MCF 10A (cell line): ENCODE measurements at regions of chr1 and their contacts with region 1.

Region 1: DNA sequence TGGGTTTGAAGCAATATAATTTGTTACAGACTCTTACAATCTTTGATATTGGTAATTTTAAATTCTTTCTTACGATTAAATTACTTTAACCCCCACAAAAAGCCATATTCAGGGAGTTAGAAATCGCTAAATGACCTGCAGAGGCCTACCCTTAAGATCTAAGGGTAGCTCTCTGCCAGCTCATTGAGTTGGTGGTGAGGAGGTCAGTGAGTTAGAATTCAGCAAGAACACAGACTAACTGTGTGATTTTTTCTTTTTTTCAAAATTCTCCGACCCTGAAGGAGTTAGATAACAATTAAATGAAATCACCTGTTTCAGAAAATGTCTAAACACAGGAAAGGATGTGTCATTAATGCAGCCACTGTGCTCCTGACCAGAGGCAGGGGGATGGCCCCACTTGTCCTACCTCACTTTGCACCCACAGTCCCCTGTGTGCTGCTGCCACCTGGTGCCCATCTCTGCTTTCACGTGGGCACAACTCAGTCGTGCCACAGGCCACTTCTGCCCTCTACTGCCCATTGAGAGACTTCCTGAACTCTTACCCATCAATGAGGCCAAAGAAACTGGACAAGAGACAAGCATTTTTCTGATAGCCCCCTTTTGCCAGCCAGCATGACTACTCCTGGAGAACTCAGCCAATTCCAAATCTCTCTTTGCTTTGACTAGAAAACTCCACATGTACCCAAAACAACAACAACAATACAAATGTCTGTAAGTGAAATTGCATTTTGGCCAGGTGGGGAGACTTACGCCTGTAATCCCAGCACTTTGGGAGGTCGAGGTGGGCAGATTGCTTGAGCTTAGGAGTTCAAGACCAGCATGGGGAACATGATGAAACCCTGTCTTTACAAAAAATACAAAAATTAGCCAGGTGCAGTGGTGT is 8.4 kb downstream of the CFAP45 start:
- DNase-seq: peak; percentile 96
- H3K4me3 Mint-ChIP-seq: no peak overlapping the region
- H3K27ac Mint-ChIP-seq: peak overlapping the region; percentile 28
- H3K4me1 Mint-ChIP-seq: peaks cover 19% of the 10 kb centered on the region
- H3K27me3 Mint-ChIP-seq: no peaks in the 10 kb centered on the region
- CTCF ChIP-seq: peak; percentile 100

Region 2: DNA sequence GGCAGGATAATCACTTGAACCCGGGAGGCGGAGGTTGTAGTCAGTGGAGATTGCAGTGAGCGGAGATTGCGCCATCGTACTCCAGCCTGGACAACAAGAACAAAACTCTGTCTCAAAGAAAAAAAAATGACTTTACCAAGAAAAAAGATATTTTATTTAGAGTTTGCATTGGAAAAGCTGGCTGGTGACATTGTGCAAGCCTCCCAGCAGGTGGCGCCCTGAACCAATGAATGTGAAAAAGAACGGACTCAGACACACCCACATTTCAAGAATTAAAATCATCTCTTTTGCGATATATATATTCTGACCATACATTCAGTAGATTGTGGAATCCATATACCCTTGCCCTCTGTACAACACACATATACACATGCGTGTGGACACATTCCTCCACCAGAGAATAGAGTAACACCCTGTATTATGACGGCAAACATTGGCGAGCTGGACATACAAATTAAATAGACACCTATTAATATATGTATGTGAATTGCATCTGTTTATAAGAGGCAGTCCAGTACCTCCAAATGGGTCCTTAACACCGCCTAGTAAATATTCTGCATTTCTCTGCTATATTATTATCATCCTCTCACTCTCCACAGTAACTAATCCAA is 759.1 kb before region 1 on chr1:
- CTCF ChIA-PET with region 1: interaction called, 123 read pairs
- POLR2A ChIA-PET with region 1: no interaction called
- intact Hi-C with region 1: loop called (anchors 1 kb)
- DNase-seq: peak; percentile 92
- H3K4me3 Mint-ChIP-seq: no peak overlapping the region
- H3K27ac Mint-ChIP-seq: no peak overlapping the region
- H3K4me1 Mint-ChIP-seq: no peaks in the 10 kb centered on the region
- H3K27me3 Mint-ChIP-seq: no peaks in the 10 kb centered on the region
- CTCF ChIP-seq: peak; percentile 95

Region 3: GRCh38 chr1:159223004-159223403 is 668.5 kb before region 1 on chr1:
- CTCF ChIA-PET with region 1: interaction called, 11 read pairs
- POLR2A ChIA-PET with region 1: no interaction called
- intact Hi-C with region 1: no loop called
- DNase-seq: no peak
- H3K4me3 Mint-ChIP-seq: no peak overlapping the region
- H3K27ac Mint-ChIP-seq: no peak overlapping the region
- H3K4me1 Mint-ChIP-seq: peaks cover 6% of the 10 kb centered on the region
- H3K27me3 Mint-ChIP-seq: no peaks in the 10 kb centered on the region
- CTCF ChIP-seq: no peak

Region 4: GRCh38 chr1:159829273-159829634 is 62.3 kb before region 1 on chr1:
- CTCF ChIA-PET with region 1: interaction called, 54 read pairs
- POLR2A ChIA-PET with region 1: no interaction called
- intact Hi-C with region 1: no loop called
- DNase-seq: peak; percentile 36
- H3K4me3 Mint-ChIP-seq: no peak overlapping the region
- H3K27ac Mint-ChIP-seq: no peak overlapping the region
- H3K4me1 Mint-ChIP-seq: peaks cover 5% of the 10 kb centered on the region
- H3K27me3 Mint-ChIP-seq: no peaks in the 10 kb centered on the region
- CTCF ChIP-seq: no peak

Region 5: GRCh38 chr1:159860426-159860825 is 31.1 kb before region 1 on chr1:
- CTCF ChIA-PET with region 1: interaction called, 146 read pairs
- POLR2A ChIA-PET with region 1: interaction called, 6 read pairs
- intact Hi-C with region 1: no loop called
- DNase-seq: no peak
- H3K4me3 Mint-ChIP-seq: no peak overlapping the region
- H3K27ac Mint-ChIP-seq: no peak overlapping the region
- H3K4me1 Mint-ChIP-seq: peaks cover 7% of the 10 kb centered on the region
- H3K27me3 Mint-ChIP-seq: no peaks in the 10 kb centered on the region
- CTCF ChIP-seq: no peak

Region 6: DNA sequence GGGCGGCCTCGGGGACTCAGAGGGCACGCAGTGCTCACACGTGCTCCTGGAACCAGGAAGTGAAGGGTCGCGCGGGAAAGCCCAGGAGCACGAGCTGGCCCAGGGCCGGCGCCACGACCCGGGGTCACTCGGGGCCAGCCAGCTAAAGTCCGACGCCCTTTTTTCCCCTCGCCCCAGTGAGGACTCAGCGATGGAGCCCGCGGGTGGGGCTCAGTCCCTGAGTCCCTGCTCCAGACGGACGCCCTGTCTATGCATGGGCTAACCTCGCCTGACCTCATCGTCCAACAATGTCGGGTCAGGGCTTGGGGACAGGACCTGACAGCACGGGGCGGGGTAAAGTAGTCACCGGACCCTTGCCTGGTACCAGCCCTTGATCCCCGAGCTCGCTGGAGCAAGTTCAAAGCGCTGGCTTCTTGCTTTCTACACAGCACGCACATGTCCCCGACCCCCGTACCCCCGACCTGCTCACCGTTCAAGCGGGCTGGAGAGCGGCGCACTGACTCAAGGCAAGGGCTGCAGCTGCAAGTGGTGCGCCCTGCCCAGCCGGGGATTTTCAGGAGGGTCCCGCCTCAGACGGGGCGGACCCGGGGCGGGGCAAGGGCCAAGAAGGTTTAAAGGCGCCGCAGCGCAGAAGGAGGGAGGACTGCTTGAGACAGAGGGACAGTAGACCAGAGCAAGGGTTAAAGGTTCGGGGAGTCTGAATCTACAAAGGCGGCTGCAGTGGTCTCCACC is 33.6 kb after region 1 on chr1 and contains the start of gene TAGLN2:
- CTCF ChIA-PET with region 1: interaction called, 97 read pairs
- POLR2A ChIA-PET with region 1: interaction called, 4 read pairs
- intact Hi-C with region 1: no loop called
- DNase-seq: peak; percentile 97
- H3K4me3 Mint-ChIP-seq: peak within 1 kb of the TSS; percentile 81
- H3K27ac Mint-ChIP-seq: peak within 1 kb of the TSS; percentile 99
- H3K4me1 Mint-ChIP-seq: peaks cover 44% of the 10 kb centered on the region
- H3K27me3 Mint-ChIP-seq: no peaks in the 10 kb centered on the region
- CTCF ChIP-seq: no peak
- total RNA-seq, gene TAGLN2: 464 and 483 TPM in 2 replicates

Region 7: DNA sequence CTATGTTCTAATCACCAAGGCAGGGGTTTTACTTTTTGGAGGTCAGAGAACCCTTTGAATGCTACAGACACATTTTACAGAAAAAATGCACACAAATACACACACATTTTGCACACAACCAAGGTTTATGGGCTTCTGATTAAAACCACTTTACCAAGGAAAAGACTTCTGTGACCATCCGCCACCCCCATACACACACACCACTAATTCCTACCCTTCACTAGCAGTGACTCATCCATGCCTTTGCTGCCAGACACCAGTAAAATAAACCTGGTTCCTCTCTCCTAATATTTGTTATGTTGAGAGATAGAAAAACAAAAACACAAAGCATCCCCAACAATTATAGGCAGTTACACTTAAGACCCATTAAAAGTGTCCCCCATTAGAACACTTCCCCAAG is 127.4 kb after region 1 on chr1:
- CTCF ChIA-PET with region 1: interaction called, 20 read pairs
- POLR2A ChIA-PET with region 1: no interaction called
- intact Hi-C with region 1: no loop called
- DNase-seq: peak; percentile 67
- H3K4me3 Mint-ChIP-seq: no peak overlapping the region
- H3K27ac Mint-ChIP-seq: no peak overlapping the region
- H3K4me1 Mint-ChIP-seq: peaks cover 27% of the 10 kb centered on the region
- H3K27me3 Mint-ChIP-seq: no peaks in the 10 kb centered on the region
- CTCF ChIP-seq: no peak

Region 8: GRCh38 chr1:160131803-160132565 is 240.5 kb after region 1 on chr1:
- CTCF ChIA-PET with region 1: no interaction called
- POLR2A ChIA-PET with region 1: no interaction called
- intact Hi-C with region 1: no loop called
- DNase-seq: no peak
- H3K4me3 Mint-ChIP-seq: no peak overlapping the region
- H3K27ac Mint-ChIP-seq: peak overlapping the region; percentile 8
- H3K4me1 Mint-ChIP-seq: peaks cover 24% of the 10 kb centered on the region
- H3K27me3 Mint-ChIP-seq: peaks cover 12% of the 10 kb centered on the region
- CTCF ChIP-seq: no peak